ENCODE measurements at regions of chr17 and their contacts with region 1.

Region 1: DNA sequence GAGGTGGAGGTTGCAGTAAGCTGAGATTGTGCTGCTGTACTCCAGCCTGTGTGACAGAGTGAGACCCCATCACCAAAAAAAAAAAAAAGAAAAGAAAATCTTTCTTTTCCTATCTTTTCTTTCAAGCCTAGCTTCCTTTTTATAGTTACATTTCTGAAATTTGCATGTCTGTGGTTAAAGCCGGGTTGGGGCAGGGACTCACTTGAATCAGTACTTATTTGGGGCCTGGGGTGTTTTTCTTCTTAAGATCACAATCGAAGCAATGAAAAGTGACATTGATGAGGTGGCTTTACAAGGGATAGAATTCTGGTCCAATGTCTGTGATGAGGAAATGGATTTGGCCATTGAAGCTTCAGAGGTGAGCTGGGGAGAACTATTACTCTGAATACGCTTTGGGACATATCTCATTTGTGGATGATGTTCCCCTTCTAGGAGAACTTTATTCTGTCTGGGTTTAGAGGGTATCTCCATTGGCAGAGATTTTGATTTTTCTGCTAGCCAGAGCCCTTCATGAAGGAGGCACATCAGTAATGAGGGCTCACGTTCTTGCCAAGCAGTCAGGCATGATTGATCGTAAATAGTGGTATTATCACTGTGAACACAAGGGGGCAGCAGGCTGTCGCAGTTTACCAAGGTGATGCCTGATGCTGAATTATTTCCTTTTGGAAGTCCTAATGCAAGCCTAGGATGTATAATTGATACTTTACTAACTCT is 14.3 kb downstream of the KPNB1 start:
- DNase-seq: peak; percentile 75
- ATAC-seq: peak; percentile 61
- H3K4me3 Mint-ChIP-seq: no peak overlapping the region
- H3K27ac Mint-ChIP-seq: peak overlapping the region; percentile 39
- H3K4me1 Mint-ChIP-seq: peaks cover 36% of the 10 kb centered on the region
- H3K27me3 Mint-ChIP-seq: no peaks in the 10 kb centered on the region

Region 2: GRCh38 chr17:47413872-47414271 is 250.2 kb before region 1 on chr17:
- CTCF ChIA-PET with region 1: no interaction called
- POLR2A ChIA-PET with region 1: no interaction called
- DNase-seq: no peak
- ATAC-seq: no peak
- H3K4me3 Mint-ChIP-seq: no peak overlapping the region
- H3K27ac Mint-ChIP-seq: no peak overlapping the region
- H3K4me1 Mint-ChIP-seq: no peaks in the 10 kb centered on the region
- H3K27me3 Mint-ChIP-seq: no peaks in the 10 kb centered on the region

Region 3: GRCh38 chr17:47649153-47649971 is 14.7 kb before region 1 on chr17 and contains the start of gene KPNB1:
- CTCF ChIA-PET with region 1: interaction called, 95 read pairs
- POLR2A ChIA-PET with region 1: interaction called, 29 read pairs
- DNase-seq: peak; percentile 99
- ATAC-seq: peak; percentile 89
- H3K4me3 Mint-ChIP-seq: peak within 1 kb of the TSS; percentile 97
- H3K27ac Mint-ChIP-seq: peak within 1 kb of the TSS; percentile 100
- H3K4me1 Mint-ChIP-seq: peaks cover 41% of the 10 kb centered on the region
- H3K27me3 Mint-ChIP-seq: no peaks in the 10 kb centered on the region
- total RNA-seq, gene KPNB1: 413 to 427 TPM

Region 4: GRCh38 chr17:47675380-47676198 is 11.5 kb after region 1 on chr17:
- CTCF ChIA-PET with region 1: interaction called, 26 read pairs
- POLR2A ChIA-PET with region 1: interaction called, 5 read pairs
- DNase-seq: no peak
- ATAC-seq: no peak
- H3K4me3 Mint-ChIP-seq: no peak overlapping the region
- H3K27ac Mint-ChIP-seq: peak overlapping the region; percentile 35
- H3K4me1 Mint-ChIP-seq: peaks cover 16% of the 10 kb centered on the region
- H3K27me3 Mint-ChIP-seq: no peaks in the 10 kb centered on the region

Region 5: DNA sequence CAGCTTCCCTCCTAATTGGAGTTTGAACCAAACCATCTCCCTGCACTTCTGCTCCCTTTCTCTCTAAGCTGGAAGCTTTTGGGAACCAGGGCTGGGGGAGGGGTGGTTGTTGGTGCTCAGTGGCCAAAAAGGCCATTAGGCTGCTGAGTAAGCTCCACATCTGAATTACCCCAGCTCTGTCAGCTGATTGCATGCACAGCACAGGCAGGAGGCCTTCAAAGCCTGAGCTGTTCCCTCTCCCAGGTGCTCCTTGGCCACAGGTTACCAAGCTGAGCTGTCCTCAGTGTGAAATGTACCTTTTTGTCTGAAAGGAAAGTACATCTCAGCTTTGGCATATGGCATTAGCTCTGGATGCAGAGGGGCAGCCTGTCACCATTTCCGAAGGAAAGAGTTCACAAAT is 23.7 kb after region 1 on chr17:
- CTCF ChIA-PET with region 1: interaction called, 12 read pairs
- POLR2A ChIA-PET with region 1: interaction called, 5 read pairs
- DNase-seq: no peak
- ATAC-seq: no peak
- H3K4me3 Mint-ChIP-seq: no peak overlapping the region
- H3K27ac Mint-ChIP-seq: no peak overlapping the region
- H3K4me1 Mint-ChIP-seq: peaks cover 12% of the 10 kb centered on the region
- H3K27me3 Mint-ChIP-seq: no peaks in the 10 kb centered on the region

Region 6: DNA sequence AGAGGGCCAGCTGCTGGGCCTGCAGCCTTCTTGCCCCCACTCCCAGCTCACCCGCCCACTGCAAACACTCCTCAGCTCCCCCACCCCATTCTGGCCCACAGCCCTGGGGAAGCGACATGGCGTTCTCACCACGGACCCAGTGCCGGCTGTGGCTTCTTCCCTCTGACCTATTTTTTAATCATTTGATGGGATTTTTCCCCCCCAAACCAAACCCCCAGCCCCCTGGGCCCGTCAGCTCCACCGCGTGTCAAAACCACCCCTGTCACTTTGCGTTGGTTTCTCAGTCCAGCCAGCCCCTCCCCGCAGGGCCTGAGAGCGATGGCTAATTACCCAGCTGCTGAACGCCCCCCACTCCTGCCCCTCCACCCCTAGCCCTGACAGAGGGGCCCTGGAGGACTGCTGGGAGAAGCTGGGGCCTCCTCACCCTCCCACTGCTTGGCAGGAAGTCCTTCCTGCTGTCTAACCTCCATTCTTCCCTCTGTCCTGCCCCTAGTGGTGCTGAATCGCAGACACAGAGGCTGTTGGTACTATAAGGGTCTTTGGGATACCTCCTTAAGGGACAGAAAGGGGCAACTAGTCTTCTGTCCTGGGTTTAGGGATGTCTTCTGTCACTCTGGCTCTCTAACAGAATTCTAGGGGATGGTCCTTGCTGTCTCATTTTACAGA is 61.5 kb after region 1 on chr17:
- CTCF ChIA-PET with region 1: no interaction called
- POLR2A ChIA-PET with region 1: no interaction called
- DNase-seq: no peak
- ATAC-seq: no peak
- H3K4me3 Mint-ChIP-seq: no peak overlapping the region
- H3K27ac Mint-ChIP-seq: peak overlapping the region; percentile 60
- H3K4me1 Mint-ChIP-seq: peaks cover 78% of the 10 kb centered on the region
- H3K27me3 Mint-ChIP-seq: no peaks in the 10 kb centered on the region

Region 7: DNA sequence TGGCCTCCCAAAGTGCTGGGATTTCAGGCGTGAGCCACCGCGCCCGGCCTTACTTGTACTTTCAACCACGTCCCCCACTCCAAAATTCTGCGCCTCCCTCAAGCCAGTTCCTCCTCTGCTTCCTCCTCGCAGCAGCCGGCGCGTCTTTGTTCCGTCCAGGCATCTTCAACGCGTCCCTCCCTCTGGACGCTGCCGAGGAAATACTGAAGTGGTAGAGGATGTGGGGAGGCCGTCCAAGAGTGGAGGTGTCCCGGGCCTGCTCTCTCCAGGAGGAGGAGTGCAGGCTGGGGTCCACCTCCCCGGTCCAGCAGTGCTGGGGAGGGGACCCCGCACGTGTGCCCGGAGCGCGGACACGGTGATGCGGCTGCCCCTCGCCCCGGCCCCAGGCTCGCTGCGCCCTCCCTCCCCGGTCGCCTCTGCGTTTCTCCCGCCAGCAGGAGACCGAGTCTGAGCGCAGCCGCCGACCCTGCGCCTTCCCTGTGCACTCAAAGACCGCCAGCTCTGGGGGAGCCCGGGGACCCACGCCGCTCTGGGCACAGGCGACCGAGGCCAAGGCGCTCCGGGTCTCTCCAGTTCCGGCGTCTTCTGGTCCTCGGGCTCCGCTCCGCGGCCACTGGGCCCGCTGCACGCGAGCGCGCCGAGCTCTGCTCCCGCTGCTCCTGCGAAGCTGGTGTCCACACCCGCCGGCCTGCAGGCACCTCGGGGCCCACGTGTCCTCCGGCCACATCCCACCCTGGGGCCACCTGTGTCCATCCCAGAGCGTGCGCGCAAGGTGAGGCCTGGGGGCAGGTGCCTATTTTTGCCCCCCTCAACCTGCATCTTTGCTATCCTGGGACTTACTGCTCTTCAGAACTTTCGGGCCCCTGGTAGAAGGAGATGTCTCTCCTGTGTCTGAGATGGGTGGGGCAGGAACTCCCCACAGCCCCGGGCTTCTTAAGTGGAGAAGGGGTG is 125.8 kb after region 1 on chr17:
- CTCF ChIA-PET with region 1: interaction called, 16 read pairs
- POLR2A ChIA-PET with region 1: no interaction called
- DNase-seq: peak; percentile 61
- ATAC-seq: peak; percentile 90
- H3K4me3 Mint-ChIP-seq: peak overlapping the region; percentile 57
- H3K27ac Mint-ChIP-seq: no peak overlapping the region
- H3K4me1 Mint-ChIP-seq: peaks cover 10% of the 10 kb centered on the region
- H3K27me3 Mint-ChIP-seq: peaks cover 48% of the 10 kb centered on the region

Region 8: GRCh38 chr17:47802341-47803022 is 138.4 kb after region 1 on chr17:
- CTCF ChIA-PET with region 1: interaction called, 10 read pairs
- POLR2A ChIA-PET with region 1: no interaction called
- DNase-seq: peak; percentile 76
- ATAC-seq: peak; percentile 91
- H3K4me3 Mint-ChIP-seq: no peak overlapping the region
- H3K27ac Mint-ChIP-seq: no peak overlapping the region
- H3K4me1 Mint-ChIP-seq: no peaks in the 10 kb centered on the region
- H3K27me3 Mint-ChIP-seq: peaks cover 3% of the 10 kb centered on the region

Region 9: DNA sequence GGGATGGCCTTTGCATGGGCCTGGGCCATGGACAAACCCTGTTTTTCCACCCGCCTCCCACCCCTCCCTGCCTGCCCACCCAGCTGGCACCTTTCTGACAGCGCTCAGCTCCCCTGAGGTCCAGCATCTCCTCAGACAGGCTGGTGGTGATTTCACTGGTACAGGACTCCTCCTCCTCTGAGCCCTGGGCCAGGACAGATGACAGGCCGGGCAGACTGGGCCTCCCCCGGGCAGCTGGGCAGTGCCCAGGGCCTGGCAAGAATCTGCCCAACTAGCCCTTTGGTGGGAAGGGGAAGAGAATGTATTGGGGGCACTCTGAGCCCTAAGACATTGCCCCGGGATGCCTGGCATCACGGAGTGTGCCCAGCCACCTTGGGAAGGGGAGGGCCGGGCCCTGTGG is 150.4 kb after region 1 on chr17:
- CTCF ChIA-PET with region 1: no interaction called
- POLR2A ChIA-PET with region 1: no interaction called
- DNase-seq: no peak
- ATAC-seq: no peak
- H3K4me3 Mint-ChIP-seq: no peak overlapping the region
- H3K27ac Mint-ChIP-seq: no peak overlapping the region
- H3K4me1 Mint-ChIP-seq: peaks cover 5% of the 10 kb centered on the region
- H3K27me3 Mint-ChIP-seq: no peaks in the 10 kb centered on the region

Measured in activated CD8-positive, alpha-beta T cell treated with anti-CD3 and anti-CD28 coated beads, Interleukin-2, amount 10 ng/mL, durations not matched to agents 7 days and 5 days (primary cell).